ENCODE measurements at regions of chr11 and their contacts with region 1.

Region 1: GRCh38 chr11:2151500-2152257 is 9.3 kb downstream of the INS start:
- DNase-seq: peak in 4 of 5 donors; percentile 67 to 78 (median 72)
- ATAC-seq: peak; percentile 30 to 64 (median 44)
- H3K4me3 ChIP-seq: no peak overlapping the region
- H3K27ac ChIP-seq: no peak overlapping the region
- H3K4me1 ChIP-seq: peaks cover 0 to 10% (median 5%) of the 10 kb centered on the region in 12 donors
- H3K27me3 ChIP-seq: peaks cover 7 to 44% (median 24%) of the 10 kb centered on the region in 9 donors
- CTCF ChIP-seq: peak; percentile 61 to 83 (median 73)
- POLR2A ChIP-seq: no peak

Region 2: DNA sequence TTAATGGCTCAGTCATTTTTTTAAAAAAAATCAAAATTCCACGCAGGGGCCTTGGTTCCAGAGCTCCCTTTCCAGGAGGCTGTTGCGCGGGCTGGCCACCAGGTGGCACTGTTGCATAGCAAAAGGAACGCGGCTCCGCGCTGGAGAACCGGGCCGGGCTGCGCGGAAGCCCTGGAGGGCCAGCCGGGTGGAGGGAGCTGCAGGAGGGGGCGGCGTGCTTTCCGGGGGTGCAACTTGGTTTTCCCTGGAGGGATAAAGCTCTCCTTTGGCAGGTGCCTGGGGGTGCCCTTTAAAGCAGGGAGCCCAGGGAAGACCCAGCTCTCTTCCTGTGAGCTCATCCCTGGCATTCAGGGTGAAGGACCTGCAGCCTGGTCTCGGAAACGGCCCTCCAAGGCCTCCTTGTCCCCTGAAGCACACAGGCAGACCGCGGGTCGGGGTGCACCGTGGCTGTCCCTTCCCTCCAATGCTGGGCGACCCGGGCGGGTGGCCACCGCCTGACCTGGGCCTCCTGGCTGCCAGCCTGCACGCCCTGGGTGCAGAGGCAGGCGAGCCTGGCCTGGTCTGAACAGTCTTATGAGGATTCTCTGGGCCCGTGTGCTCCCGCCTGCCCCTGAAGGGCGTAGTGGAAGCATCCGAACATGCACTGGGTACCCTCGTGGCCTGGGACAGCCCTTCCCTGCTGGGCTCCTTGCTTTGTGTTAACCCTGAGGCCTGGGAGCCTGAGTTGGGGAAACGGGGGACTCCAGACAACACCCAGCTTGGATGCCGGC is 498.7 kb before region 1 on chr11:
- intact Hi-C with region 1: loop called (anchors 2 to 10 kb)
- DNase-seq: peak; percentile 67 to 89 (median 72)
- ATAC-seq: peak; percentile 59 to 89 (median 80)
- H3K4me3 ChIP-seq: no peak overlapping the region
- H3K27ac ChIP-seq: no peak overlapping the region
- H3K4me1 ChIP-seq: peaks cover 0 to 8% (median 0%) of the 10 kb centered on the region in 12 donors
- H3K27me3 ChIP-seq: peaks cover 0 to 27% (median 0%) of the 10 kb centered on the region in 9 donors
- CTCF ChIP-seq: peak; percentile 95 to 99 (median 97)
- POLR2A ChIP-seq: no peak

Region 3: DNA sequence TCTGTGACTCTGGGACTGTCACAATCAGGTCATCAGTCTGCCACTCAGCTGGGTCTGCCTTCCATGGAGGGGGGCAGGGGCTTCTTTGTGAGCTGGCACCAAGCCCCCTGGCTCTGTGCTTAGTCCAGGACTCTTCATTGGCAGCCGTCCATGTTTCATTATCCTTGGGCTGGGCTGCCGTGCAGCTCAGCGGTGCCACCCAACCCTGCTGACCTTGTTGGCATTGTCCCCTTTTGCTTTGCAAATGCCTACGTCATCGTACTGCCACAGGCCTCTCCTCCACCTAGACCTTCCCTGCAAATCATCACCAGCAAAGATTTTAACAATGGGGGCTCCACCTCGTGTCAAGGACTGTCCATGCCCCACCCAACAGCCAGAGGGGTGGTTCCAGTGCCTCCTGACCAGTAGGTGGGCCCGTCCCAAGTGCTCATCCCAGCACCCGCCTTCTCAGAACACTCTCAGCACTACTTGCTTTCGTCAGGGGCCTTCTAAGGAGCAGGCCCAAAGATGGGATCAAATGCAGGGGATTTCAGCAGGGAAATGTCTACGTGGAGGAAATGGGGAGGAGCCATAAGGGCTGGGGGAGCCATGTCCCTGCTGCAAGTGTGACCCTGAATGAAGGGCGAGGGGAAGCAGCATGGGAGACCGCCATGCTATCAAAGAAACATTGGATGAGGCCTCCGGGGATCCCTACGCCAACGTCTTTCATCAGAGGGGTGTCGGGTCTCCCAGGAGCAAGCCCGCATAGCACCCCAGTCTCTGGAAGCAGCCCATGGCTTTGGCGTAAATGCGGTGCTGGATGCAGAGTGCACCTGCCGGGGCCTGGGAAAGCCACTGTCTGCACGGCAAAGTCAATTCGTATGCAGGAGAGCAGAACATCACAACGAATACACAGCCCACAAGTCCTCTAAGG is 436.4 kb before region 1 on chr11:
- intact Hi-C with region 1: no loop called
- DNase-seq: peak in 4 of 5 donors; percentile 50 to 84 (median 59)
- ATAC-seq: peak; percentile 62 to 91 (median 88)
- H3K4me3 ChIP-seq: no peak overlapping the region
- H3K27ac ChIP-seq: peak overlapping the region in 1 of 12 donors; percentile 49
- H3K4me1 ChIP-seq: peaks cover 0 to 7% (median 0%) of the 10 kb centered on the region in 12 donors
- H3K27me3 ChIP-seq: peaks cover 0 to 6% (median 0%) of the 10 kb centered on the region in 9 donors
- CTCF ChIP-seq: no peak
- POLR2A ChIP-seq: no peak

Region 4: DNA sequence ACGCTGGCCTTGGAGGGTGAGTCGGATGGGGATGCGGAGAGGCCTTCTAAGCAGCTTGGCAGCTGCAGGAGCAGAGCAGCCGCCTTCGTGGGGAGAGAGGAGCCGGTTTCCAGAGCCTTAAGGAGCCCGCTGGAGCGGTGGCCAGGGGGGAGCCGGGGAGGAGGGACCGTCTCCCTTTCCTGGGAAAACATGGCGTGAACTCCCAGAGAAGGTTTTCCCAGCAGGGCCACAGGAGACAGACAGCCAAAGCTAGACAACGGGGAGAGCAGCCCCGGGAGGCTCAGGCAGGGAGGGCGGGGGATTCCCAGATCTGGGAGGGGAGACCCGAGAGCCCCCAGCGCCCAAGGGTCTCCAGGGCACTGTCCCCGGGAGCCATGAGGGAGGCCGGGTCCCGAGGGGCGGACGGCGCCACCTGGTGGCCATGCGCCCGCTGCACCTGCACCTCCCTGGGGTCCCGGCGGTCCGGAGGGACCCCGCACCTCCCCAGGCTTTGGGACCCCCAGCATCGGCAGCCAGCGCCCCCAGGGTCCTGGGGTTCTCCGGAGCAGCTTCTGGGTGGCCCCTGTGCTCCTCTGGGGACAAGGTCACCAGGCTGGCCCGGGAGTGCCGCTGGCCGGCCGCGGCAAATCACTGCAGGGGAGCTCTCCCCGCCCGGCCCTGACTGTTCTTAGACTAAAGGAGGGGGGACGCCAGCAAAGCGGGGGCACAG is 319.3 kb before region 1 on chr11:
- intact Hi-C with region 1: loop called in 6 of 10 experiments (anchors 1 to 5 kb)
- DNase-seq: peak in 4 of 5 donors; percentile 52 to 80 (median 60)
- ATAC-seq: peak; percentile 74 to 83 (median 80)
- H3K4me3 ChIP-seq: peak overlapping the region in 9 of 12 donors; percentile 5 to 40 (median 28)
- H3K27ac ChIP-seq: no peak overlapping the region
- H3K4me1 ChIP-seq: peaks cover 0 to 15% (median 7%) of the 10 kb centered on the region in 12 donors
- H3K27me3 ChIP-seq: peaks cover 0 to 18% (median 0%) of the 10 kb centered on the region in 9 donors
- CTCF ChIP-seq: peak in 11 of 12 donors; percentile 95 to 100 (median 98)
- POLR2A ChIP-seq: peak in 1 of 2 donors; percentile 18

Region 5: DNA sequence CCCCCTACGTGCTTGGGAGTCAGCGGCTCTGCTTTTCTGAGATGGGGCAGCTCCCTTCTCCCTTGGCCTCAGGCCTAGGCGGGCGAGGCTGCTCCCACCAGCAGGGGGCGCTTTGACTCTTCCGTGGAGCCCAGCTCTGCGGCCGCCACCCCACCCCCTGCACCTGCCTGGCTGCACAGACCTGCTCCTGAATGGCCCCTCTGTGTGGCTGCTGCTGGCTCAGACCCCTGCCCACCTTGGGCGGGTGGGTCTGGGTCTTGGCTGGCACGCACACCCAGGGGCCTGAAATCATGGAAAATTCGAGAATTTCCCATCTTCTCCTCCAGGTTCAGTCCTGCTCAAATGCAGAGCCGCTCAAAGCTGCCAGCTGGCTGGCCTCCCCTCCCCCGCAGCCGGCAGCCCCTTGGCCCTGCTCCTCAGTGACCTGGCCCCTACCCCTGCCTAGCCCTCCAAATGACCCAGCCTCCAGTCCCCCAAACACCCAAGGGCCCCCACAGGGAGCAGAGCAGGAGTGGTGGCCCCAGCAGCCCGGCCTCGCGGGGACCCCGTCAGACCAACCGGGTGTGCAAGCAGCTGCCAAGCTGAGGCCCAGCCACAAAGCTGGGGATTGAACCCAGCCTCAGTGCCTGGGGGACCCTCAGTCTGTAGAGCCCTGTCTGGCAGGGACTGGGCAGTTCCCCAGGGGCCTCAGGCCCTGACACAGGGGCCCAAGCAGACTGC is 269.0 kb before region 1 on chr11:
- intact Hi-C with region 1: loop called in 9 of 10 experiments (anchors 1 to 10 kb)
- DNase-seq: peak; percentile 87 to 94 (median 88)
- ATAC-seq: peak; percentile 75 to 83 (median 78)
- H3K4me3 ChIP-seq: peak overlapping the region in 1 of 12 donors; percentile 13
- H3K27ac ChIP-seq: peak overlapping the region; percentile 85 to 99 (median 96)
- H3K4me1 ChIP-seq: peaks cover 19 to 53% (median 44%) of the 10 kb centered on the region in 12 donors
- H3K27me3 ChIP-seq: no peaks in the 10 kb centered on the region
- CTCF ChIP-seq: peak; percentile 87 to 98 (median 93)
- POLR2A ChIP-seq: no peak

Region 6: GRCh38 chr11:2072551-2073261 is 79.0 kb before region 1 on chr11:
- intact Hi-C with region 1: no loop called
- DNase-seq: peak in 1 of 5 donors; percentile 15
- ATAC-seq: no peak
- H3K4me3 ChIP-seq: no peak overlapping the region
- H3K27ac ChIP-seq: no peak overlapping the region
- H3K4me1 ChIP-seq: no peaks in the 10 kb centered on the region
- H3K27me3 ChIP-seq: peaks cover 0 to 15% (median 0%) of the 10 kb centered on the region in 9 donors
- CTCF ChIP-seq: no peak
- POLR2A ChIP-seq: no peak

Region 7: DNA sequence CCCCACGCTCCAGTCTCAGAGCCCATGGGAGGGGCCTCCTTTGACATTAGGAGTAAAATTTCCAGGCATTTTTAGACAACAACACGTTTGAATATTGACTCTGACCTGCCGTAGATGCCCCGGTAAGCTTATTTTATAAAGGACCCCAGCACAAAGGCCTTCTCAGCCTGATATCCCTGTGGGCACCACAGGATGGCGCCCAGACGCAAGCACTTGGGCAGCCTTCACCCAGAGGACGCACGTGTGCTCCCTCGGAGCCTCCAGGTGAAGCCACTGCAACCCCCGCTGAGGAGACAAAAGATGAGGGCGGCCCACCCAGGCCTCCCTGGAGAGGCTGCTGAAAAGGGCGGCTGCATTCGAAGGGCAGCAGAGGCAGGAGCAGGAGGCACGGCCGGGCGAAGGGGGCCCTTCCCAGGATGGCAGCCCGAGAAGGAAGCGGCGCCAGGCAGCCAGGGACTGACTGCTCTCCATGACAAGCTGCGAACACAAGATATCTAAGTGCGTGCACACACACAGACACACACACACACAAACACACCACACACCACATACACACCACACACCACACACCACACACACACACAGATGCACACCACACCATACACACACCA is 35.1 kb after region 1 on chr11:
- intact Hi-C with region 1: no loop called
- DNase-seq: no peak
- ATAC-seq: peak in 3 of 4 donors; percentile 52 to 72 (median 59)
- H3K4me3 ChIP-seq: no peak overlapping the region
- H3K27ac ChIP-seq: no peak overlapping the region
- H3K4me1 ChIP-seq: peaks cover 0 to 18% (median 0%) of the 10 kb centered on the region in 12 donors
- H3K27me3 ChIP-seq: peaks cover 0 to 32% (median 6%) of the 10 kb centered on the region in 9 donors
- CTCF ChIP-seq: peak; percentile 41 to 62 (median 53)
- POLR2A ChIP-seq: no peak